Tibial artery (tissue), 4 donors: ENCODE measurements at regions of chr19 and their contacts with region 1.

Region 1: DNA sequence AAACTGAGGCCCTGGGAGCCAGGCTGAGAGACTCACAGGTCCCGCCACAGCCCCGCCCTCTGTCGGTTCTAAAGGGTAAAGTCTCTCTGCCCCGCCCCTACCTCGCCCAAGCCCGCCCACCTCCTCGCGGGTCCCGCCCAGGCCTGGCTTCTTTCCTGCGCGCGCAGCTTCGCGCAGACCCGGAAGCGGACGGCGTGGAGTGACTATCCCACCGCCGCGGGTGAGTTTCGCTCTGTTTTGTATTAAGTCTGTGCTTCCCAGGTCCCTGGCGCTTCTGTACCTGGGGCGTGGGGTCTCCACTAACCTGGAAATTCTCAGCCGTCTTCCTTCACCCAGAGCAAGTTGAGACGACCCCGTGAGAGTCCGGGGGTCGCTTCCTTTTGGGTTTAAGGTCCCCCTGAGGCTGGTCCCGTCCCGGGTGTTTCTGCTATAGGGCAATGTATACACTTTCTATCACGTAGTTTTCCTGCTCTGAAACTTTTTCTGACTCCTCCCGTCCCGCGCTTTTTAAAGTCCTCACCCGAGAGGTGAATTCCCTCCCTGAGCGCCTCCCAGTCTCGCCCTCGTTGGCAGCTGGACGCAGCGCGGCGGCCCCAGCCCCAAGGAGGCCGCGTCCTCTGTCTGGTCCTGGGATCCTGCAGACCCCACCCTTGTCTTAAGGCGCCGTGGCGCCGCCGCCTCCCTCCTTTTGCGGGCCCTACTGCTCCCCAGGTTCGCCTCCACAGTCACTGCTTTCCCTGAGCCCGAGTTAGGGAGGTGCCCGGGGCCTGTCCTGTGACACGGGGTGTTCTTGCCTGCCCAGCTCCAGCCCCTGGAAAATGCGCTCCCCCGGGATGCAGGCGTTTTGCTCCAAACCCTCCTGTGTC is at the start of gene ZNF765:
- DNase-seq: peak; percentile 95 to 96
- H3K4me3 ChIP-seq: peak within 1 kb of the TSS; percentile 66 to 83
- H3K27ac ChIP-seq: peak within 1 kb of the TSS; percentile 68 to 87
- H3K4me1 ChIP-seq: peaks cover 5 to 21% (median 14%) of the 10 kb centered on the region in 4 donors
- H3K27me3 ChIP-seq: no peaks in the 10 kb centered on the region
- CTCF ChIP-seq: peak; percentile 54 to 68

Region 2: DNA sequence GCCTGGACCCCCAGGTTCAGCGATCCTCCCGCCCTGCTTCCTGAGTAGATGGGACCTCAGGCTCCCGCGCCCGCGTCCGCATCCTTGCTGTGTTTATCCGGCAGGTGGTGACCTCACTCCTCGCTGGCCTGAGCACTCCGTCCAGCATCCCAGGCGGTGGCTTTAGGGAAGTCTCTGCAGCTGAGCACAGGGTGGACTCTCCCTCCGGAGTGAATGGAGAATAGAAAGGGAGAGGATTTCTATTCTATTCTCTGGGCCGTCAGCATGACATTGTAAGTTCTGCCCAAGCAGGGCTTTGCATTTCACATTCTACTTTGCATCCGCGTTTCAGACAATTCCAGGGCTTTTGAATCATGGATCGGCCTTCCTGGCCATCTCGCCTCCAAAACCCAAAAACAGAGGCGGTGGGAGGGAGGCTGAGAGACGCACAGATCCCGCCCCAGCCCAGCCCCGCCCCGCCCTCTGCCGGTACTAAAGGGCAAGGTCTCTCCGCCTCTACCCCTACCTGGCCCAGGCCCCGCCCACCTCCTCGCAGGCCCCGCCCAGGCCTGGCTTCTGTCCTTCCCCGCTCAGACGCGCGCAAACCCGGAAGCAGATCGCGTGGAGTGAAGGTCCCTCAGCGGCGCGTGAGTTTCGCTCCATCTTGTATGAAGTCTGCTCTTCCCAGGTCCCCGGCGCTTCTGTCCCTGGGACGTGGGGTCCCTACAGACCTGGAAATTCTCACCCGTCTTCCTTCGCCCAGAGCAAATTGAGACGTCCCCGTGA is 29.9 kb before region 1 on chr19 and contains the start of gene ZNF525:
- intact Hi-C with region 1: loop called (anchors 2 kb)
- DNase-seq: peak; percentile 91 to 95
- H3K4me3 ChIP-seq: peak within 1 kb of the TSS; percentile 68 to 77
- H3K27ac ChIP-seq: peak within 1 kb of the TSS; percentile 80 to 83
- H3K4me1 ChIP-seq: peaks cover 0 to 13% (median 1%) of the 10 kb centered on the region in 4 donors
- H3K27me3 ChIP-seq: no peaks in the 10 kb centered on the region
- CTCF ChIP-seq: peak in 1 of 2 experiments; percentile 16

Region 3: DNA sequence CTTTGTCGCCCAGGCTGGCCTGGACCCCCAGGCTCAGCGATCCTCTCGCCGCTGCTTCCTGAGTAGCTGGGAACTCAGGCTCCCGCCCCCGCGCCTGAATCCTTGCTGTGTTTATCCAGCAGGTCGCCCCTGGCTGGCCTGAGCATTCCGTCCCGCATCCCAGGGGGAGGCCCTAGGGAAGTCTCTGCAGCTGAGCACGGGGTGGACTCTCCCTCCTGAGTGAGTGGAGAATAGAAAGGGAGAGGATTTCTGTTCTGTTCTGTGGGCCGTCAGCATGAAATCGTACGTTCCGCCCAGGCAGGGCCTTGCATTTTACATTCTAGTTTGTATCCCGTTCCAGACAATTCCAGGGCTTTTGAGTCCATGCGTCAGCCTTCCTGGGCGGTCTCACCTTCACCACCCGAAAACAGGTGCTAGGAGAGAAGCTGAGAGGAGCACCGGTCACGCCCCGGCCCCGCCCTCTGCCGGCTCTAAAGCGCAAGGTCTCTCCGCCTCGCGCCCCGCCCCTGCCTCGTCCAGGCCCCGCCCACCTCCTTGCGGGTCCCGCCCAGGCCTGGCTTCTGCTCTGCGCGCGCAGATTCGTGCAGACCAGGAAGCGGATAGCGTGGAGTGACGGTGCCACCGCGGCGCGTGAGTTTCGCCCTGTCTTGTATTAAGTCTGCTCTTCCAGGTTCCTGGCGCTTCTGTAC is 36.3 kb after region 1 on chr19 and contains the start of gene ZNF761:
- intact Hi-C with region 1: loop called (anchors 2 kb)
- DNase-seq: peak; percentile 91 to 96
- H3K4me3 ChIP-seq: peak within 1 kb of the TSS; percentile 72 to 80
- H3K27ac ChIP-seq: peak within 1 kb of the TSS; percentile 74 to 81
- H3K4me1 ChIP-seq: peaks cover 0 to 14% (median 2%) of the 10 kb centered on the region in 4 donors
- H3K27me3 ChIP-seq: no peaks in the 10 kb centered on the region
- CTCF ChIP-seq: peak; percentile 48 to 56